Activated naive CD4-positive, alpha-beta T cell treated with anti-CD3 and anti-CD28 coated beads, Interleukin-2, amount 10 ng/mL, durations not matched to agents 7 days and 5 days (primary cell): ENCODE measurements at regions of chr6 and their contacts with region 1.

Region 1: DNA sequence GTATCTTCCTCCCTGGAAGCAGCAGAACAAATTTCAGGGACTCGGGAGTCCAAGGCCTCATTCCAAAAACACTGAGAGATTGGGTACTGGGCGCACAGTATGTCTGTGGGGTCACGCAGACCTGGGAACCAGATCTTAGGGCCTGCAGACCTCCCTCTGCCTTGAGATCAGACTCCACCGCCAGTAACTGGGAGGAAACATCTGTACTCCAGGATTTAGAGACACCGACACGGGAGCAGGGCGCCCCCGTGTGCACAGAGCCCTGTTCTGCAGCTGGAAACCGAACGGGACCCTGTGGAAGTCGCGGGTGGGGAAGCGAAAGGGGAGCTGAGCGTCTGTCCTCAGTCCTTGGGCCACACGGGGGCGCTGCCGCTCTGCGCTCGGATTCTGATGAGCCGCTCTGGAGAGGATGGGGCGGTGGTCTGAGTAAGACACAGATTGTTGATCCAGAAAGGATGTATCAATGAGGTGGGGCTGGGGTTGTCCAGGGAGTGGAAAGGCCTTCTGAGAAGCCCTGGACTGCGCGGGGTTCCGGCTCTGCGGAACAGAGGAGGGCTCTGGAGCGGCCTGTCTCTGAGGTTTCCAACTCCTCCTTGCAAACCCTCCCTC is 35.7 kb upstream of the HLA-E start:
- DNase-seq: peak; percentile 89
- H3K4me3 Mint-ChIP-seq: no peak overlapping the region
- H3K27ac Mint-ChIP-seq: no peak overlapping the region
- H3K4me1 Mint-ChIP-seq: peaks cover 34% of the 10 kb centered on the region
- H3K27me3 Mint-ChIP-seq: peaks cover 96% of the 10 kb centered on the region

Region 2: GRCh38 chr6:30411515-30412207 is 42.0 kb before region 1 on chr6:
- CTCF ChIA-PET with region 1: interaction called, 10 read pairs
- DNase-seq: peak; percentile 73
- H3K4me3 Mint-ChIP-seq: no peak overlapping the region
- H3K27ac Mint-ChIP-seq: no peak overlapping the region
- H3K4me1 Mint-ChIP-seq: peaks cover 8% of the 10 kb centered on the region
- H3K27me3 Mint-ChIP-seq: peaks cover 88% of the 10 kb centered on the region

Region 3: GRCh38 chr6:30463651-30464618 is 10.3 kb after region 1 on chr6:
- CTCF ChIA-PET with region 1: interaction called, 40 read pairs
- DNase-seq: peak; percentile 73
- H3K4me3 Mint-ChIP-seq: no peak overlapping the region
- H3K27ac Mint-ChIP-seq: no peak overlapping the region
- H3K4me1 Mint-ChIP-seq: peaks cover 25% of the 10 kb centered on the region
- H3K27me3 Mint-ChIP-seq: peaks cover 94% of the 10 kb centered on the region

Region 4: GRCh38 chr6:30483677-30484279 is 30.2 kb after region 1 on chr6:
- CTCF ChIA-PET with region 1: interaction called, 10 read pairs
- DNase-seq: no peak
- H3K4me3 Mint-ChIP-seq: no peak overlapping the region
- H3K27ac Mint-ChIP-seq: no peak overlapping the region
- H3K4me1 Mint-ChIP-seq: peaks cover 51% of the 10 kb centered on the region
- H3K27me3 Mint-ChIP-seq: peaks cover 60% of the 10 kb centered on the region

Region 5: GRCh38 chr6:30578051-30578450 is 124.4 kb after region 1 on chr6:
- CTCF ChIA-PET with region 1: no interaction called
- DNase-seq: no peak
- H3K4me3 Mint-ChIP-seq: no peak overlapping the region
- H3K27ac Mint-ChIP-seq: no peak overlapping the region
- H3K4me1 Mint-ChIP-seq: peaks cover 25% of the 10 kb centered on the region
- H3K27me3 Mint-ChIP-seq: no peaks in the 10 kb centered on the region